B cell (primary cell): ENCODE measurements at regions of chr2 and their contacts with region 1.

Region 1: GRCh38 chr2:101400048-101400447 is 12.7 kb upstream of the CREG2 start:
- DNase-seq: peak; percentile 60
- ATAC-seq: peak; percentile 40
- H3K4me3 ChIP-seq: peak overlapping the region in 1 of 5 experiments; percentile 23
- H3K4me3 Mint-ChIP-seq: peak overlapping the region; percentile 78
- H3K27ac ChIP-seq: peak overlapping the region in 1 of 2 donors; percentile 50
- H3K27ac Mint-ChIP-seq: peak overlapping the region; percentile 89
- H3K4me1 ChIP-seq: peaks cover 53 to 62% of the 10 kb centered on the region in 2 donors
- H3K4me1 Mint-ChIP-seq: peaks cover 52% of the 10 kb centered on the region
- H3K27me3 ChIP-seq: no peaks in the 10 kb centered on the region
- H3K27me3 Mint-ChIP-seq: peaks cover 8% of the 10 kb centered on the region
- CTCF ChIP-seq: no peak

Region 2: GRCh38 chr2:101387151-101387807 is 12.8 kb before region 1 on chr2 and contains the start of gene CREG2:
- CTCF ChIA-PET with region 1: interaction called, 8 read pairs
- POLR2A ChIA-PET with region 1: no interaction called
- intact Hi-C with region 1: loop called (anchors 1 kb)
- DNase-seq: peak; percentile 70
- ATAC-seq: peak; percentile 77
- H3K4me3 ChIP-seq: peak within 1 kb of the TSS in 4 of 5 experiments; percentile 30 to 56 (median 44)
- H3K4me3 Mint-ChIP-seq: peak within 1 kb of the TSS; percentile 84
- H3K27ac ChIP-seq: no peak within 1 kb of the TSS
- H3K27ac Mint-ChIP-seq: no peak within 1 kb of the TSS
- H3K4me1 ChIP-seq: peaks cover 13 to 16% of the 10 kb centered on the region in 2 donors
- H3K4me1 Mint-ChIP-seq: peaks cover 14% of the 10 kb centered on the region
- H3K27me3 ChIP-seq: peaks cover 0 to 40% (median 27%) of the 10 kb centered on the region in 4 experiments
- H3K27me3 Mint-ChIP-seq: peaks cover 55% of the 10 kb centered on the region
- CTCF ChIP-seq: peak; percentile 69
- total RNA-seq, gene CREG2: 0.34 TPM in 1 of 2 replicates, not detected in the other

Region 3: GRCh38 chr2:101450965-101451364 is 50.9 kb after region 1 on chr2:
- CTCF ChIA-PET with region 1: no interaction called
- POLR2A ChIA-PET with region 1: no interaction called
- intact Hi-C with region 1: no loop called
- DNase-seq: no peak
- ATAC-seq: no peak
- H3K4me3 ChIP-seq: no peak overlapping the region
- H3K4me3 Mint-ChIP-seq: no peak overlapping the region
- H3K27ac ChIP-seq: no peak overlapping the region
- H3K27ac Mint-ChIP-seq: no peak overlapping the region
- H3K4me1 ChIP-seq: no peaks in the 10 kb centered on the region
- H3K4me1 Mint-ChIP-seq: no peaks in the 10 kb centered on the region
- H3K27me3 ChIP-seq: no peaks in the 10 kb centered on the region
- H3K27me3 Mint-ChIP-seq: peaks cover 12% of the 10 kb centered on the region
- CTCF ChIP-seq: no peak

Region 4: GRCh38 chr2:101479328-101479727 is 79.3 kb after region 1 on chr2:
- CTCF ChIA-PET with region 1: no interaction called
- POLR2A ChIA-PET with region 1: no interaction called
- intact Hi-C with region 1: no loop called
- DNase-seq: no peak
- ATAC-seq: no peak
- H3K4me3 ChIP-seq: no peak overlapping the region
- H3K4me3 Mint-ChIP-seq: no peak overlapping the region
- H3K27ac ChIP-seq: no peak overlapping the region
- H3K27ac Mint-ChIP-seq: no peak overlapping the region
- H3K4me1 ChIP-seq: peaks cover 7 to 8% of the 10 kb centered on the region in 2 donors
- H3K4me1 Mint-ChIP-seq: peaks cover 8% of the 10 kb centered on the region
- H3K27me3 ChIP-seq: peaks cover 0 to 29% (median 6%) of the 10 kb centered on the region in 4 experiments
- H3K27me3 Mint-ChIP-seq: peaks cover 40% of the 10 kb centered on the region
- CTCF ChIP-seq: no peak